PC-3 (cell line): ENCODE measurements at regions of chr15 and their contacts with region 1.

Region 1: GRCh38 chr15:35725353-35725752 is 179.4 kb upstream of the DPH6 start:
- DNase-seq: peak; percentile 97
- ATAC-seq: peak; percentile 94
- H3K4me3 ChIP-seq: no peak overlapping the region
- H3K27ac ChIP-seq: peak overlapping the region; percentile 87
- H3K4me1 ChIP-seq: peaks cover 48% of the 10 kb centered on the region
- H3K27me3 ChIP-seq: no peaks in the 10 kb centered on the region
- CTCF ChIP-seq: no peak

Region 2: GRCh38 chr15:35545824-35546510 is 179.4 kb before region 1 on chr15 and contains the start of gene DPH6:
- CTCF ChIA-PET with region 1: no interaction called
- POLR2A ChIA-PET with region 1: no interaction called
- intact Hi-C with region 1: loop called (anchors 2 kb)
- DNase-seq: peak; percentile 76
- ATAC-seq: peak; percentile 90
- H3K4me3 ChIP-seq: peak within 1 kb of the TSS; percentile 76
- H3K27ac ChIP-seq: peak within 1 kb of the TSS; percentile 89
- H3K4me1 ChIP-seq: peaks cover 19% of the 10 kb centered on the region
- H3K27me3 ChIP-seq: no peaks in the 10 kb centered on the region
- CTCF ChIP-seq: no peak
- total RNA-seq, gene DPH6: 6.9 and 8.1 TPM in 2 replicates

Region 3: GRCh38 chr15:35648941-35649340 is 76.4 kb before region 1 on chr15:
- CTCF ChIA-PET with region 1: no interaction called
- POLR2A ChIA-PET with region 1: no interaction called
- intact Hi-C with region 1: no loop called
- DNase-seq: no peak
- ATAC-seq: no peak
- H3K4me3 ChIP-seq: no peak overlapping the region
- H3K27ac ChIP-seq: no peak overlapping the region
- H3K4me1 ChIP-seq: no peaks in the 10 kb centered on the region
- H3K27me3 ChIP-seq: no peaks in the 10 kb centered on the region
- CTCF ChIP-seq: no peak

Region 4: DNA sequence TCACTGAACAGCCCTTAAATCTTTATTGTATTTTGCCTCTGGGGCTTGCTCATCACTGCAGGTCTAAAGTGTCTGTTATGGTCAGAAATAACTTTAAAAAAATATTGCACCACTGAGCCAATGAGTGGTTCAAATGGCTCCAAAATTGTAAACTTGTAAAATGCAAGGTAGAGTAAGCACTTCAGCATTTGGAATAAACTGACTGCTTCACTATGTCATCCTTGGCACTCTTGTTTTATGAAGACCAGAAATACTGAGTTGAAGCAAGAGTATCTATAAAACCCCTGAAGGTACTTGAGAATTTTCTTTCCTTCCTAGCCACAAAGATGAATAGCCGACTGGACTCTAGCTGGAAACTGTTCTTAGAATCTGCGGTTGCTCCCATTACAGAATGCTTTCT is 210.9 kb after region 1 on chr15:
- CTCF ChIA-PET with region 1: interaction called, 14 read pairs
- POLR2A ChIA-PET with region 1: no interaction called
- intact Hi-C with region 1: no loop called
- DNase-seq: no peak
- ATAC-seq: no peak; the same call in 1 of the 2 replicates
- H3K4me3 ChIP-seq: no peak overlapping the region
- H3K27ac ChIP-seq: no peak overlapping the region
- H3K4me1 ChIP-seq: no peaks in the 10 kb centered on the region
- H3K27me3 ChIP-seq: no peaks in the 10 kb centered on the region
- CTCF ChIP-seq: no peak